CD14-positive monocyte (primary cell): ENCODE measurements at regions of chr22 and their contacts with region 1.

Region 1: GRCh38 chr22:50326959-50327710 is at the start of gene DENND6B:
- DNase-seq: peak; percentile 70 to 84 (median 84)
- H3K4me3 ChIP-seq: peak within 1 kb of the TSS; percentile 63 to 79 (median 66)
- H3K4me3 Mint-ChIP-seq: peak within 1 kb of the TSS; percentile 82 to 90
- H3K27ac ChIP-seq: peak within 1 kb of the TSS; percentile 56 to 80
- H3K27ac Mint-ChIP-seq: peak within 1 kb of the TSS; percentile 46 to 85 (median 80)
- H3K4me1 ChIP-seq: peaks cover 11 to 17% of the 10 kb centered on the region in 2 donors
- H3K4me1 Mint-ChIP-seq: peaks cover 20% of the 10 kb centered on the region
- H3K27me3 ChIP-seq: peaks cover 0 to 7% of the 10 kb centered on the region in 2 donors
- H3K27me3 Mint-ChIP-seq: peaks cover 18 to 23% (median 19%) of the 10 kb centered on the region in 3 donors
- CTCF ChIP-seq: peak; percentile 64
- polyA plus RNA-seq, gene DENND6B: 1.7 to 10.6 (median 2.1) TPM

Region 2: GRCh38 chr22:50276143-50276542 is 51.0 kb before region 1 on chr22:
- intact Hi-C with region 1: loop called (anchors 2 to 5 kb)
- DNase-seq: peak; percentile 66 to 86 (median 82)
- H3K4me3 ChIP-seq: no peak overlapping the region
- H3K4me3 Mint-ChIP-seq: no peak overlapping the region
- H3K27ac ChIP-seq: no peak overlapping the region
- H3K27ac Mint-ChIP-seq: peak overlapping the region in 2 of 7 donors; percentile 50 to 76
- H3K4me1 ChIP-seq: peaks cover 10 to 18% of the 10 kb centered on the region in 2 donors
- H3K4me1 Mint-ChIP-seq: peaks cover 15% of the 10 kb centered on the region
- H3K27me3 ChIP-seq: peaks cover 3 to 11% of the 10 kb centered on the region in 2 donors
- H3K27me3 Mint-ChIP-seq: peaks cover 6 to 23% (median 16%) of the 10 kb centered on the region in 3 donors
- CTCF ChIP-seq: peak; percentile 88

Region 3: GRCh38 chr22:50293441-50294318 is 33.5 kb before region 1 on chr22:
- intact Hi-C with region 1: loop called (anchors 5 kb)
- DNase-seq: no peak
- H3K4me3 ChIP-seq: peak overlapping the region in 2 of 3 experiments; percentile 1 to 54
- H3K4me3 Mint-ChIP-seq: peak overlapping the region; percentile 63
- H3K27ac ChIP-seq: no peak overlapping the region
- H3K27ac Mint-ChIP-seq: peak overlapping the region in 1 of 7 donors; percentile 41
- H3K4me1 ChIP-seq: peaks cover 38 to 60% of the 10 kb centered on the region in 2 donors
- H3K4me1 Mint-ChIP-seq: peaks cover 52% of the 10 kb centered on the region
- H3K27me3 ChIP-seq: no peaks in the 10 kb centered on the region
- H3K27me3 Mint-ChIP-seq: peaks cover 0 to 2% (median 0%) of the 10 kb centered on the region in 3 donors
- CTCF ChIP-seq: no peak

Region 4: GRCh38 chr22:50306753-50307749 is 20.1 kb before region 1 on chr22 and contains the start of gene PLXNB2:
- intact Hi-C with region 1: loop called (anchors 1 to 2 kb)
- DNase-seq: peak; percentile 63 to 71 (median 71)
- H3K4me3 ChIP-seq: peak within 1 kb of the TSS; percentile 90 to 100 (median 92)
- H3K4me3 Mint-ChIP-seq: peak within 1 kb of the TSS; percentile 96
- H3K27ac ChIP-seq: peak within 1 kb of the TSS; percentile 97 to 100
- H3K27ac Mint-ChIP-seq: peak within 1 kb of the TSS; percentile 95 to 100 (median 99)
- H3K4me1 ChIP-seq: peaks cover 57 to 62% of the 10 kb centered on the region in 2 donors
- H3K4me1 Mint-ChIP-seq: peaks cover 49% of the 10 kb centered on the region
- H3K27me3 ChIP-seq: no peaks in the 10 kb centered on the region
- H3K27me3 Mint-ChIP-seq: peaks cover 2% of the 10 kb centered on the region in 3 donors
- CTCF ChIP-seq: no peak
- polyA plus RNA-seq, gene PLXNB2: 38.2 to 368 (median 70.5) TPM

Region 5: GRCh38 chr22:50406416-50407170 is 79.5 kb after region 1 on chr22:
- intact Hi-C with region 1: no loop called
- DNase-seq: no peak
- H3K4me3 ChIP-seq: no peak overlapping the region
- H3K4me3 Mint-ChIP-seq: no peak overlapping the region
- H3K27ac ChIP-seq: peak overlapping the region in 1 of 2 donors; percentile 20
- H3K27ac Mint-ChIP-seq: peak overlapping the region in 5 of 7 donors; percentile 18 to 80 (median 73)
- H3K4me1 ChIP-seq: peaks cover 20 to 26% of the 10 kb centered on the region in 2 donors
- H3K4me1 Mint-ChIP-seq: peaks cover 32% of the 10 kb centered on the region
- H3K27me3 ChIP-seq: no peaks in the 10 kb centered on the region
- H3K27me3 Mint-ChIP-seq: peaks cover 0 to 3% (median 0%) of the 10 kb centered on the region in 3 donors
- CTCF ChIP-seq: no peak